ENCODE measurements at regions of chr17 and their contacts with region 1.

Region 1: GRCh38 chr17:75779231-75779986 is 5.2 kb upstream of the UNK start:
- DNase-seq: peak; percentile 94 to 99
- H3K4me3 ChIP-seq: peak overlapping the region; percentile 90
- H3K27ac ChIP-seq: peak overlapping the region; percentile 93
- H3K4me1 ChIP-seq: peaks cover 70% of the 10 kb centered on the region
- H3K27me3 ChIP-seq: no peaks in the 10 kb centered on the region
- CTCF ChIP-seq: no peak

Region 2: DNA sequence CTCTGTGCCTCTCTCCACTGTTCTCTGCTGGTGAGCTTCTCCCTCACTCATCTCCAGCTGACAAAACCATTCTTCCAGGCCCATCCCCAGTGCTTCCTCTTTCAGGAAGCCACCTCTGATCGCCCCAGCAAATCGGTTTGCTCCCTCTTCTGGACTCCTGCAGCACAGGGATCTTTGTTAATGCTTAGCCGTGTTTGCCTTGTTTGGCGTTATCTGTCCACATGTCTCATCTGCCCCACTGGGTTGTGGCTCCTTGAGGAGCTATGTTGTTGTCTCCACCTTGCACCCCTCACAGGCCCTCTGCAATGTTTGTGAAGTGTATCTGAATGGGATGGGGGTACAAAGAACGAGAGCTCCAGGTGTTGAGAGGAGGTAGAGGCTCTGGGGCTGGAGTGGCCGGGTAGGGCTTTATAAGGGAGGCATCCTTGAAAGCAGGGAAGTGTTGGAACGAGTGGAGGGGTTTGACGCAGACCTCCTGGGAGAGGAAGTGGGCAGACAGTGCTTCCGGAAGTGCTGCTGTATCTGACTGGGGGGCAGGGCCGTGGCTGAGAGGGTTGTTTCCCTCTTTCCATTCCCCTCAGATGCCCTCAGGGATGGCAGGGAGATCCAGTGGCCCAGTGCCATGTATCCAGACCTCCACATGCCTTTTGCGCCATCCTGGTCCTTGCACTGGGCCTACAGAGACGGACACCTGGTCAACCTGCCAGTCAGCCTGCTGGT is 291.9 kb before region 1 on chr17:
- CTCF ChIA-PET with region 1: no interaction called
- POLR2A ChIA-PET with region 1: no interaction called
- intact Hi-C with region 1: no loop called
- DNase-seq: no peak
- H3K4me3 ChIP-seq: no peak overlapping the region
- H3K27ac ChIP-seq: no peak overlapping the region
- H3K4me1 ChIP-seq: no peaks in the 10 kb centered on the region
- H3K27me3 ChIP-seq: no peaks in the 10 kb centered on the region
- CTCF ChIP-seq: no peak

Region 3: GRCh38 chr17:75524953-75525719 is 254.3 kb before region 1 on chr17 and contains the start of gene LLGL2:
- CTCF ChIA-PET with region 1: interaction called, 4 read pairs
- POLR2A ChIA-PET with region 1: interaction called, 31 read pairs
- intact Hi-C with region 1: no loop called
- DNase-seq: peak; percentile 77 to 95
- H3K4me3 ChIP-seq: peak within 1 kb of the TSS; percentile 100
- H3K27ac ChIP-seq: peak within 1 kb of the TSS; percentile 55
- H3K4me1 ChIP-seq: peaks cover 21% of the 10 kb centered on the region
- H3K27me3 ChIP-seq: no peaks in the 10 kb centered on the region
- CTCF ChIP-seq: peak; percentile 60
- total RNA-seq, gene LLGL2: 138 and 156 TPM in 2 replicates

Region 4: DNA sequence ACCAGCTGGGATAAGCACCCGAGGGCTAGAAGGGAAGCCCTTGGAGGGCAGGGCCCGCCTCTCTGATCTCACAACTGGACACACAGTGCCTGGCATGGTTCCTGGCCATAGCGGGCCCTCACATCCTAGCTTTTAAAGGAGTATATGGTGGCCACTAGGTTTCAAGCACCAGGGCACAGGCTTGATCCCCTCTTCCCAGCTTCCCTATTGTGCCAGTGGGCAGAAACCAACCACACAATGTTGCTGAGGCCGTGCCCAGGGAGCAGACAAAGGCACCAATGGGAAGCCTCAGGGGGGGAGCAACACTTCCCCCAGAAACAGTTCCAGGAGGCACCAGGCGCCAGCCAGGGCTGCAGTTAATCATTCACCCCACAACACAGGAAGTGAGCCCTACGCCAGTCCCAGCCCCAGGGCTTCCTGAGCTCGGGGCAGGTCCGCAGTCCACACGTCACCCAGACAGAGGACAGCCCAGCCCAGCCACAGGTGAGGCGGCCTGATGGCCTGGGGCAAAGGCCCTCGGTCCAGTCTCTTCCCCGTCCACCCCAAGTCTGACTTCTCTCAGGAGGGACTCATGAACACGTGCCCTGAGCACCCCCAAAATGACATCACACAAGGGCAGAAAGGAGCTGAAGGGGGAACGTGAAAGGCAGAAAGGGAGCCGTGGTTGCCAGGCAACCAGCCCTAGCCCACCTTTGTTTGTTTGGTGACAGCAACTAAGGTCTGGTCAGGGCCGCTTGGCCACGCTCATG is 133.3 kb before region 1 on chr17:
- CTCF ChIA-PET with region 1: no interaction called
- POLR2A ChIA-PET with region 1: interaction called, 15 read pairs
- intact Hi-C with region 1: no loop called
- DNase-seq: peak; percentile 84 to 85
- H3K4me3 ChIP-seq: no peak overlapping the region
- H3K27ac ChIP-seq: peak overlapping the region; percentile 92
- H3K4me1 ChIP-seq: peaks cover 51% of the 10 kb centered on the region
- H3K27me3 ChIP-seq: no peaks in the 10 kb centered on the region
- CTCF ChIP-seq: no peak

Region 5: DNA sequence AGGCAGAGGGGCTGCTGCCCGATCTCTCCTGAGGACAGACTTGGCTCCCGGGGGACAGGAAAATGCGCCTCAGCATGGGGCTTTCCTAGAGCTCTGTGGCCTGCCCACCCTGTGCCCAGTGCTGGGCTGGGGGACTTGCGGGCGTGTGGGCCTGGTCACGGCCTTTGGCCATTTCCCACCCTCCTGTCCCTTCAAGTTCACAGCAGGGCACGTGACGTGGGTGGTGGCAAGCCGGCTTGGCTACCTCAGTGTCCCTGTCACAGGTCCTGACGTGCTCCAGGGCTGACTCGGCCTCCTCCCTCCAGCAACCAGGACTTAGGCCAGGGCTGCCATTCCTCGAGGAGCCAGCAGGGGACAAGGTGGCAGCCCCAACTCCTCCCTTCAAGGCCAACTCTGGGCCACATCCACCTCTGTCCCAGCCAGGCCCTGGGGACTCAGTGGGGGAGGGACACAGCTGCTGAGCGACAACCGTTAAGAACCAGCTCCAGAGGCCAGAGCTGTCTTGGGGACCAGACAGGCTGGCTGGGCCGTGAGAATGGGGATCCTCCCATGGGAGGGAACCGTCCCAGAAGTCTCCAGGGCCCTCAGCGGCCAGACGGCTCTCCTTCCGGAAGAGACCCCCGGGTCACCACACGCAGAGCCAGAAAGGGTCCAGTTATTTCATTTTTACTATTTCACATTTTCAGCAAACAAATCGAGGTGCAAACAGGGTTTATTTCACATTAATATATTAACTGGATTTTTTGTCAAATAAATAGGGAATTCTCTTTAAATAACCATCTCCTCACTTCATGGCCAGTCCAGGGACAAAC is 65.8 kb after region 1 on chr17:
- CTCF ChIA-PET with region 1: no interaction called
- POLR2A ChIA-PET with region 1: interaction called, 19 read pairs
- intact Hi-C with region 1: loop called (anchors 1 kb)
- DNase-seq: peak; percentile 89 to 93
- H3K4me3 ChIP-seq: peak overlapping the region; percentile 40; the same call in 1 of the 2 replicates
- H3K27ac ChIP-seq: peak overlapping the region; percentile 96
- H3K4me1 ChIP-seq: peaks cover 51% of the 10 kb centered on the region
- H3K27me3 ChIP-seq: no peaks in the 10 kb centered on the region
- CTCF ChIP-seq: peak; percentile 92

Region 6: DNA sequence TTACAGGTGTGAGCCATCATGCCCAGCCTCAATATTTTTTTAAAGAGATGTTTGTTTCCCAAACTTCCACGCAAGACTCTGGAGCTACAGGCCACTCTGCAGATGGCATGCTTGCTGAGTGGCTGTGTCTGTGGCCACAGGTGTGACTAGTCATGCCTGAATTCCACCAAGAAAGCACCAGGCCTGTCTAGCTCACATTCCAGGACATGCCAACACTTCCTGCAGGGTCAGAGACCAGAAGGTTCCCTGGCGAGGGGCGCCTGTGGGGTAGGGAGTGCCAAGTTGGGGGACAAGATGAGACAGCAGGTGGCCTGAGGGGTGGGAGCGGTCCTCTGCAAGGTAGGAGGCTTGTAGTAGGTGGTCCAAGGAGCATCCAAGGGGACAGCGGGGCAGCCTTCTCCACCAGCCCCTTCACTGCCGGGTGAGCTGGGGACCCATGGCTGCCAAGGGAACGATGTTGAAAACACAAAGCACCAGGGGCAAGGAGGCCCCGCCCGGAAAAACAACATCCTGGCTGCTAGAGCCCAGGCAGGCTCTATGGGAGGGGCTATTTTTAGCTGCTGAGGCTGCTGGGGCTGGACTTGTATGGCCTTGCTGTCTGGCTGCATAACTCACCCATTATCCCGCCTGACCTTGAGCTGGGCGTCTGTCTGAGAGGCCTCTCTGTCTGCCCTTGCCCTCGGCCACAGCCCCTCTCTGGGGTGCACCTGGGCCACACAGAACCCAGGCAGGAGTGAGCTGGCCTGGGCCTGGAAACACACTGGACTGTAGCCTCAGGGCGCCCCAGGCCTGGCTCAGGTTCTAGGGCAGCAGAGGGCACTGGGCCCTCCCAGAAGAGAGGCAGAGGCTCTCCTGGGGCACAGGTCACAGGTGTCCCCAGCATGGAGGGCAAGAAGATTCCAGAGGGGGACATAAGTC is 93.3 kb after region 1 on chr17:
- CTCF ChIA-PET with region 1: interaction called, 4 read pairs
- POLR2A ChIA-PET with region 1: interaction called, 13 read pairs
- intact Hi-C with region 1: loop called (anchors 1 kb)
- DNase-seq: peak; percentile 84 to 87
- H3K4me3 ChIP-seq: no peak overlapping the region; the same call in 1 of the 2 replicates
- H3K27ac ChIP-seq: peak overlapping the region; percentile 58
- H3K4me1 ChIP-seq: peaks cover 46% of the 10 kb centered on the region
- H3K27me3 ChIP-seq: no peaks in the 10 kb centered on the region
- CTCF ChIP-seq: no peak

Region 7: DNA sequence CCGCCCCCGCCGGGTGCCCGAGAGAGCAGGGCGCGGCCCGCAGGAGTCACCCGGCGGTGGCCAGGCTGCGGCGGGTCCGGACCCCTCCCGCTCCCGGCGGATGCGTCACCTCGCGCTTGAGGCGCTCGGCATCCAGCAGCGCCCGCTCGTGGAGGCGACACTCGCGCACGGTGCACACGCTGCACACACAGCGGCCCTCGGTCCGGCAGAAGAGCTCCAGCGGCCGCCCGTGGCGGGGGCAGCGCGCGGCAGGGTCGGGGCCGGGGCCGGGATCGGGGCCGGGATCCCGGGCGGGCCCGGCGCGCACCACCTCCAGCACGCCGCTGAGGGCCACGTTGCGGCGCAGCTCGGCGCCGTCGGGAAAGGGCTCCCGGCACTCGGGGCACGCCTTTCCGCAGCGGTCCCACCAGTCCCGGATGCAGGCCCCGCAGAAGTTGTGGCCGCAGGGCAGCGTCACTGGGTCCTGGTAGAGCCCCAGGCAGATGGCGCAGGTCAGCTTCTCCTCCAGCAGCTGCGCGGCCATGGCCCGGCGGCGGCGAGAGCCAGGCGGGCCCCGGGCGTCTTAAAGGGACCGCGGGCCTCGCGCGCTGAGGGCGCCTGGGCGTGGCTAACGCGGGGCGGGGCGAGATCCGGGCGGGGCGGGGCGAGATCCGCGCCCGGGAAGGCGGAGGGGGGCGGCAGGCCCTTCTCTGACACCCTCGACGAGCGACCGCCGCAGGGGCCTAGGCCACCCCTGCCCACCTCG is 117.2 kb after region 1 on chr17 and contains the start of gene TRIM65:
- CTCF ChIA-PET with region 1: no interaction called
- POLR2A ChIA-PET with region 1: interaction called, 12 read pairs
- intact Hi-C with region 1: no loop called
- DNase-seq: peak; percentile 59 to 77
- H3K4me3 ChIP-seq: peak within 1 kb of the TSS; percentile 77
- H3K27ac ChIP-seq: peak within 1 kb of the TSS; percentile 33
- H3K4me1 ChIP-seq: 0 out of 2 replicates have a peak, but pooled peaks cover 4% of the 10 kb centered on the region
- H3K27me3 ChIP-seq: no peaks in the 10 kb centered on the region
- CTCF ChIP-seq: no peak
- total RNA-seq, gene TRIM65: 21.1 and 27.1 TPM in 2 replicates

Region 8: DNA sequence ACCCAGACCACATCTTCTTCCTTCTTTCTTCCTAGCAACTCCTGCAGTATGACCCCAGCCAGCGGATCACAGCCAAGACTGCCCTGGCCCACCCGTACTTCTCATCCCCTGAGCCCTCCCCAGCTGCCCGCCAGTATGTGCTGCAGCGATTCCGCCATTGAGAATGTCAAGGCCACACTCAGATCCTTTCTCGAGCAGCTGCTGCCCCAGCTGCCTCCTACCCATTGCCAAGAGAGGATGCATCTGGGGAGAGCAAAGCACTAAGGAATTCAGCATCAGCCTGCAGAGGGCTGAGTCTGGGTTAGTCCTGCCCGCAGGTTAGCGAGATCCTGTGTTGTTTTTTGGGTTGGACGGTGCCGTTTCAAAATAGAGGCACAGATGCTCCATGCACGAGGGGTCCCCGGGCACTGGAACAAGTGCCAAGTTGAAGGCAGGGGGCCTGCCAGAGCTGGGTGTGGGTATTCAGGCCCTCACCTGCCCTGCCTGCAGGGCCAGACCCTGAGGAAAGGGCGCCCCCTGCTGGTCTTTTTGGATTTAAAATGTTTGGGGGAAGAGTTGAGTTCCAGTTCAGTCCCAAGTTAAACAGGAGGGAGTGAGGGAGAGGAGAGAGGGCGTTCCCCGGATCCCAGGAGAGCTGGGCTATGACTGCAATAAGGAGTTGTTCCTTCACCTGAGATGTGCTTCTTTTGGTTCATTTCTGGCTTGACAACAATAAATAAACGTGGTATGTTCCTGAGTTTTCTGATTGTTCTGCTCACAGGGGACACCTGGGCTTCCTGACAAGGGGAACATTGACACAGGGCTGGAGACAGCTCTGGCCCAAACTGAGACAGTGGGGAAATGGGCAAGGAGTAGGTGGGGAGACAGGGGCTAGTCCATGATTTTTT is 226.1 kb after region 1 on chr17:
- CTCF ChIA-PET with region 1: no interaction called
- POLR2A ChIA-PET with region 1: interaction called, 3 read pairs
- intact Hi-C with region 1: loop called (anchors 10 kb)
- DNase-seq: peak; percentile 55 to 82
- H3K4me3 ChIP-seq: no peak overlapping the region
- H3K27ac ChIP-seq: no peak overlapping the region
- H3K4me1 ChIP-seq: no peaks in the 10 kb centered on the region; the same call in 1 of the 2 replicates
- H3K27me3 ChIP-seq: no peaks in the 10 kb centered on the region
- CTCF ChIP-seq: peak; percentile 93

Measured in PC-9 (cell line).